ENCODE measurements at regions of chr3 and their contacts with region 1.

Region 1: GRCh38 chr3:52056968-52057805 is 816 bp upstream of the DUSP7 start:
- DNase-seq: peak; percentile 99
- H3K4me3 Mint-ChIP-seq: peak overlapping the region; percentile 92
- H3K27ac Mint-ChIP-seq: peak overlapping the region; percentile 88
- H3K4me1 Mint-ChIP-seq: peaks cover 30% of the 10 kb centered on the region
- H3K27me3 Mint-ChIP-seq: no peaks in the 10 kb centered on the region

Region 2: DNA sequence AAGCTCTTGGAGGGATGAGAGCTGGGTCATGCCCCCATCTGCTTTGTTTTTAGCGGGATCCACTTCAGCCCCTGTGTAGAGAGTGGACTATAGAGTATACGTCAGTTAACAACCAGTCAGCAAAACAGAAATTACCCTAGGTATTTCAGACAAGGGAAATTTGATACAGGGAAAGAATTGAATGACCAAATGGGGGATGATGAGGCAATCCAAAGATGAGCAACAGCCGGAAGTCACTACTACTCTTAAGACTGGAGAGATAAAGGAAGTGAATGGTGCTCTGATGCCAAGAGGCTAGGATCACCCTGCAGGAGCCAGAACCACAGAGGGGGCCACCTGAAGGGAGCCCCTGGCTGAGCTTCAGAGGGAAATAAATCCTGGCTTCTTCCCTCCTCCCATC is 103.7 kb before region 1 on chr3:
- intact Hi-C with region 1: no loop called
- DNase-seq: no peak
- H3K4me3 Mint-ChIP-seq: no peak overlapping the region
- H3K27ac Mint-ChIP-seq: no peak overlapping the region
- H3K4me1 Mint-ChIP-seq: no peaks in the 10 kb centered on the region
- H3K27me3 Mint-ChIP-seq: peaks cover 31% of the 10 kb centered on the region

Region 3: DNA sequence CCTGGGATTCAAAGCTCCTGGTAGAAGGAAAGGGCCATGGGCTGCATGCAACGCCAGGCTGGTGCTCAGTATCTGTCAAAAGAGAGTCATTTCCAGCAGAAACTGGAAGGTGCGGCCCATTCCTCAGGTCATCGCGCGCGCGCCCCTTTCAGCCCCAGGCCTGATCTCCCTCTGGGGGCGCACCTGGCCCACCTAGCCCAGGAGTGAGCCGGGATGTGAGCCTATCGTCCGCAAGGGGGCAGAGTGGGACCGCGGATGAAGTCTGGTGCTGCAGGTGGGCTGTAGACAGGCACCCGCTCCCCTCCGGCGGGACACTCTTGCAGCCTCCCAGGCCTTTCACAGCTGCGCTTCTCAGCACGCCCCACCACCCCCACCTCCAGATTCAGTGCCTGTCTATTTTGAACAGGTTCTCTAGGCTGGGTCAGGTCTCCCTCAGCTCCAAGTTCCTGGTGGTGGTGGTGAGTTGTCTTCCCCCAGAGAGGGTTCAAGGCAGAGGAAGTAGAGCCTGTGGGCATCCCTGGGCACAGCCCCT is 55.7 kb before region 1 on chr3:
- intact Hi-C with region 1: loop called (anchors 2 kb)
- DNase-seq: peak; percentile 77
- H3K4me3 Mint-ChIP-seq: no peak overlapping the region
- H3K27ac Mint-ChIP-seq: no peak overlapping the region
- H3K4me1 Mint-ChIP-seq: peaks cover 13% of the 10 kb centered on the region
- H3K27me3 Mint-ChIP-seq: peaks cover 17% of the 10 kb centered on the region

Region 4: DNA sequence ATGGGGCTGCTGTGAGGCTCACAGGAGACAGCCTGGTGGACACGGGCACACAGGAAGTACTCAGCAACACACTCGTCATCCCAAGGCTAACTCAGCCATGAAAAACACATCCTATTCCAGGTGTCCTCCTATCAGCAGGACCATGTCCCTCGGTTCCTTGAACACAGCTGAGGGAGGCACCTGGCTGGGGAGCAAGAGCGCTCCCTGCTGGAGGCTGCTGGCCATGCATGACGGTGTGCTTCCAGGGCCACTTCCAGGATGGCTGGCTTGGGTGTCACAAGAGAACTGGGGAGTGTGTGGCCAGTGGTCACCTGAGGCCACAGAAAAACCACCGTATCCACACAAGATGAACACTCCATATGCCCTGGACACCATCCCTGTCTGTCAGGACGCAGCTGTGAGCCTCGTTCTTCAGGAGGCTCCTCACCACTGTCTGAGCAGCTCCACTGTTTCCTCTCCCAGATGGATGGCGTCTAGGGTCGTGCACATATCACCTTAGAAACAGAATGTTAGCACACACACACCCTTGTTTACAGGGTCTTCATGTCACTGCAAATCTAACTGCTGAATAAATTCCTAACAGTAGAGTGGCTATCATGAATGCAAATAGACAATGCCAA is 66.0 kb after region 1 on chr3:
- intact Hi-C with region 1: loop called (anchors 2 kb)
- DNase-seq: peak; percentile 64
- H3K4me3 Mint-ChIP-seq: no peak overlapping the region
- H3K27ac Mint-ChIP-seq: no peak overlapping the region
- H3K4me1 Mint-ChIP-seq: peaks cover 7% of the 10 kb centered on the region
- H3K27me3 Mint-ChIP-seq: no peaks in the 10 kb centered on the region

Region 5: GRCh38 chr3:52197842-52198668 is 140.9 kb after region 1 on chr3 and contains the start of gene ALAS1:
- intact Hi-C with region 1: loop called (anchors 2 kb)
- DNase-seq: peak; percentile 94
- H3K4me3 Mint-ChIP-seq: peak within 1 kb of the TSS; percentile 99
- H3K27ac Mint-ChIP-seq: peak within 1 kb of the TSS; percentile 88
- H3K4me1 Mint-ChIP-seq: peaks cover 48% of the 10 kb centered on the region
- H3K27me3 Mint-ChIP-seq: no peaks in the 10 kb centered on the region
- total RNA-seq, gene ALAS1: 117 and 123 TPM in 2 replicates

Region 6: DNA sequence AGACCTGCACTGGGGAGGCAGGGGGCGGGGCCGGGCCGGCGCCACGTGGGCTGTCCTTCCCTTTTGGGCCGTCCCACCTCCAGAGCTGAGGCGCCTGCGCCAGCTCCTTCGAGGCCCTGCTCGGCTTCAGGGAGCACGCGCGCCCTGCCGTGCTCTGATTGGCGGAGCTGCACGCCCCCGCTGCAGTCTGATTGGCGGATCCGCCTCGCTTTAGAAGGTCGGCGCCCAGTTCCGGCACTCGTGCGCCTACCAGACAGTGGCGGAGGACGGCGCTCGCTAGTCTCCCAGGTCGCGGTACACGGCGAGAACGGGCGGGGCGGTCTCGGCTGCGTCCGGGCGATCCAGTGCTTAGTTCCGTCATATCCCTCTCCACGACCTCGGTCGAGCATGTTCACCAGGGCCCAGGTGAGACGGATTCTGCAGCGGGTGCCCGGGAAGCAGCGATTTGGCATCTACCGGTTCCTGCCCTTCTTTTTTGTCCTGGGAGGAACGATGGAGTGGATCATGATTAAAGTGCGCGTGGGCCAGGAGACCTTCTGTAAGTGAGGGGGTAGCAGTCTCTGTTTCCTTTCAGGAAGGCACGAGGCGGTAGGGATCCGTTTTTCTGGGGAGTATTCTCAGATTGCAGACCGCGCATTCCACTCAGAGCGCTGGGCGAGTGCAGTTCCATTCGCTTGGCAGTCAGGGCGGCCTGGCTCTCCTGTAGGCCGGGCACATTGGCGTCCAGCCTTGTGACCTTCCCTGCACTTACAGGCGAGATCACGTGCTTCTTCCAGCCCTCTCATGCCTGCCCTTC is 479.4 kb after region 1 on chr3 and contains the start of gene UQCC5:
- intact Hi-C with region 1: loop called (anchors 10 kb)
- DNase-seq: peak; percentile 98
- H3K4me3 Mint-ChIP-seq: peak within 1 kb of the TSS; percentile 100
- H3K27ac Mint-ChIP-seq: peak within 1 kb of the TSS; percentile 99
- H3K4me1 Mint-ChIP-seq: peaks cover 46% of the 10 kb centered on the region
- H3K27me3 Mint-ChIP-seq: no peaks in the 10 kb centered on the region
- total RNA-seq, gene UQCC5: 12.5 and 16.4 TPM in 2 replicates

Measured in activated T-helper 2 cell treated with anti-CD3 and anti-CD28 coated beads, Interferon-gamma antibody, Interleukin-2, Interleukin-4, amounts not matched to agents 10 μg/mL and 5 μg/mL and 100 μg/mL, durations not matched to agents 14 hours and 24 hours and 36 hours (primary cell).